ENCODE measurements at regions of chr22 and their contacts with region 1.

Region 1: GRCh38 chr22:40346178-40347118 is at the start of gene ADSL:
- DNase-seq: peak; percentile 92
- ATAC-seq: peak; percentile 90
- H3K4me3 Mint-ChIP-seq: peak within 1 kb of the TSS; percentile 96
- H3K27ac Mint-ChIP-seq: peak within 1 kb of the TSS; percentile 96
- H3K4me1 Mint-ChIP-seq: peaks cover 41% of the 10 kb centered on the region
- H3K27me3 Mint-ChIP-seq: no peaks in the 10 kb centered on the region
- CTCF ChIP-seq: no peak
- total RNA-seq, gene ADSL: 160 to 169 TPM

Region 2: DNA sequence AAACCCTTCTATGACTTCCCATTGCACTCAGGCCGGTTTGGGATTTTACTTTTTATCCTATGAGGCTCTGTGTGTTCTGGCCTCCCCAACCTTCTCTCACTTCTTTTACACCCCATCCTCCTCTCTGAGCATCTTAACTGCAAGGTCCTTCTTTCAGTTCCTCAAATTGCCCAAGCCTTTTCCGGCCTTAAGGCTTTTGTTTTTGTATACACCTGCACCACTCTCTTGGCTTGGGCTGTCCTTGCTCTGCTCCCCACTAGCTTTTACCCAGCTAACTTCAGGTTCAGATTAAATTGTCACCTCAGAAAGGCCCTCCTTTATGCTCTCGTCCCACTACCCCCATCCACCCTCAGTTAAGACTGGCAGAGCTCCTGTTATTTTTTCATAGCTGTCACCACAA is 296.2 kb before region 1 on chr22:
- CTCF ChIA-PET with region 1: interaction called, 35 read pairs
- POLR2A ChIA-PET with region 1: interaction called, 10 read pairs
- intact Hi-C with region 1: no loop called
- DNase-seq: no peak
- ATAC-seq: no peak
- H3K4me3 Mint-ChIP-seq: peak overlapping the region; percentile 4
- H3K27ac Mint-ChIP-seq: peak overlapping the region; percentile 80
- H3K4me1 Mint-ChIP-seq: peaks cover 66% of the 10 kb centered on the region
- H3K27me3 Mint-ChIP-seq: no peaks in the 10 kb centered on the region
- CTCF ChIP-seq: no peak

Region 3: GRCh38 chr22:40177738-40178416 is 168.6 kb before region 1 on chr22 and contains the start of gene TNRC6B:
- CTCF ChIA-PET with region 1: interaction called, 34 read pairs
- POLR2A ChIA-PET with region 1: interaction called, 13 read pairs
- intact Hi-C with region 1: loop called (anchors 5 kb)
- DNase-seq: peak; percentile 84
- ATAC-seq: peak; percentile 75
- H3K4me3 Mint-ChIP-seq: peak within 1 kb of the TSS; percentile 89
- H3K27ac Mint-ChIP-seq: peak within 1 kb of the TSS; percentile 92
- H3K4me1 Mint-ChIP-seq: peaks cover 49% of the 10 kb centered on the region
- H3K27me3 Mint-ChIP-seq: no peaks in the 10 kb centered on the region
- CTCF ChIP-seq: no peak
- total RNA-seq, gene TNRC6B: 42.6 to 45.2 TPM

Region 4: DNA sequence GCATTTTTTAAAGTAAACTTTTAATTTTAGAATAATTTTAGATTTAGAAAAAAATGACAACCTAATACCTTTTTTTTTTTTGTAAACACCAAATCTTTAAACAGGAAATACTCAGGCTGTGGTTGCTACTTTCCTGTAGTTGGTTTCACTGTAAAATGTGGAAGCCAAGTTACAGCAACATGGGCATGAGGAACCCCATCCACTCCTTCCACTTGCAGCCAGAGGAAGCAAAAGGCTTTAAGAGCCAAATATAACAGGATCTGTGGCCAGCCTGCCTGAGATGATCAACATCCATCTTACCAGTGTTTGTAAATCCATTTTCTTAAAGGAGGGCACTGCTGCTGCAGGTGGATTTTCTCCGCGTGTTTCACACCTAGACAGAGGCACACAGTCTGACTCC is 102.6 kb before region 1 on chr22:
- CTCF ChIA-PET with region 1: interaction called, 14 read pairs
- POLR2A ChIA-PET with region 1: interaction called, 3 read pairs
- intact Hi-C with region 1: no loop called
- DNase-seq: no peak
- ATAC-seq: no peak
- H3K4me3 Mint-ChIP-seq: no peak overlapping the region
- H3K27ac Mint-ChIP-seq: peak overlapping the region; percentile 43
- H3K4me1 Mint-ChIP-seq: peaks cover 73% of the 10 kb centered on the region
- H3K27me3 Mint-ChIP-seq: no peaks in the 10 kb centered on the region
- CTCF ChIP-seq: no peak

Region 5: GRCh38 chr22:40310081-40310767 is 36.2 kb before region 1 on chr22:
- CTCF ChIA-PET with region 1: interaction called, 21 read pairs
- POLR2A ChIA-PET with region 1: no interaction called
- intact Hi-C with region 1: no loop called
- DNase-seq: no peak
- ATAC-seq: no peak
- H3K4me3 Mint-ChIP-seq: no peak overlapping the region
- H3K27ac Mint-ChIP-seq: no peak overlapping the region
- H3K4me1 Mint-ChIP-seq: peaks cover 36% of the 10 kb centered on the region
- H3K27me3 Mint-ChIP-seq: no peaks in the 10 kb centered on the region
- CTCF ChIP-seq: no peak

Region 6: DNA sequence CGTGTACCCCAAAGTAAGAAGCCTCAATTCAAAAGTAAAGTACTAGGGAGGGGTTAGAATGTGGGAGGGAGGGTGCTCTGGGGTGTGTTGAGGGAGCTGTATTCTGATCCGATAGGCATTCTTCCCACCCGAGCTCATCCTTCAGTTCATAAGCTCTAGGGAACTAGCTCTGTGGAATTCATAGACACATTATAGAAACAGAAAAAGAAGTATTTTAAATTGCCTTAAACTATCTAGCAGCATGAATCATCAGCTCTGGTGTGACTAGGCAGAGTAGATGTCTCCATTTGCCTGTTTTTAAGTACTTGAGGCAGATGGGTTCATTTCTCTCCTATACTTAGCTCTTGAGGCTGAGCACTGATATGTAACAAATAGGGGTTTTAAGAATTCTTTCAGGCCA is 16.6 kb after region 1 on chr22:
- CTCF ChIA-PET with region 1: interaction called, 19 read pairs
- POLR2A ChIA-PET with region 1: interaction called, 10 read pairs
- intact Hi-C with region 1: no loop called
- DNase-seq: no peak
- ATAC-seq: no peak
- H3K4me3 Mint-ChIP-seq: no peak overlapping the region
- H3K27ac Mint-ChIP-seq: no peak overlapping the region
- H3K4me1 Mint-ChIP-seq: peaks cover 4% of the 10 kb centered on the region
- H3K27me3 Mint-ChIP-seq: no peaks in the 10 kb centered on the region
- CTCF ChIP-seq: no peak

Region 7: GRCh38 chr22:40415531-40416266 is 69.3 kb after region 1 on chr22:
- CTCF ChIA-PET with region 1: no interaction called
- POLR2A ChIA-PET with region 1: no interaction called
- intact Hi-C with region 1: no loop called
- DNase-seq: peak; percentile 45
- ATAC-seq: peak; percentile 47
- H3K4me3 Mint-ChIP-seq: no peak overlapping the region
- H3K27ac Mint-ChIP-seq: peak overlapping the region; percentile 84
- H3K4me1 Mint-ChIP-seq: peaks cover 34% of the 10 kb centered on the region
- H3K27me3 Mint-ChIP-seq: no peaks in the 10 kb centered on the region
- CTCF ChIP-seq: no peak

Region 8: GRCh38 chr22:40593460-40594273 is 247.2 kb after region 1 on chr22:
- CTCF ChIA-PET with region 1: no interaction called
- POLR2A ChIA-PET with region 1: no interaction called
- intact Hi-C with region 1: no loop called
- DNase-seq: no peak
- ATAC-seq: no peak
- H3K4me3 Mint-ChIP-seq: no peak overlapping the region
- H3K27ac Mint-ChIP-seq: no peak overlapping the region
- H3K4me1 Mint-ChIP-seq: peaks cover 42% of the 10 kb centered on the region
- H3K27me3 Mint-ChIP-seq: no peaks in the 10 kb centered on the region
- CTCF ChIP-seq: no peak

Measured in activated CD8-positive, alpha-beta T cell treated with anti-CD3 and anti-CD28 coated beads for 36 hours (primary cell).